ENCODE measurements at regions of chr1 and their contacts with region 1.

Region 1: DNA sequence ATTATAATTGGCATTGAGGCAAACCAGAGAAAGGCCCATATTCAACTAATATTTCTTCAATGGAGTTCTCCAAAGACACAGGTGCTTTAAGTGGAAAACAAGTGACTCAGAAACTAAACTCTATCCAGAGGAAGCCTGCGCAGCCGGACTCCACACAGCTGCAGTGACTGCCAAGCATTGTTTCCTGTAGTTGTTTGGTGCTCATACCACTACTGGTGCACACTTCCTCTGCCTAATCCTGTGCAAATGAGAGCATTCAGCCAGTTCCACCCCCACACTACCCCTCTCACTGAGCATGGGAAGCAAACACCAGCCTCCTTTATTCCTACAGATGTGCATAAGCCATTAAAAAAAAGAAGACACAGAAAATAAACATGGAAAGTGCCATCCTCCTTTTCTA is 102.9 kb downstream of the VAV3 start:
- DNase-seq: peak; percentile 95
- H3K4me3 ChIP-seq: no peak overlapping the region
- H3K27ac ChIP-seq: no peak overlapping the region
- H3K4me1 ChIP-seq: peaks cover 15% of the 10 kb centered on the region
- H3K27me3 ChIP-seq: no peaks in the 10 kb centered on the region
- CTCF ChIP-seq: no peak
- POLR2A ChIP-seq: no peak

Region 2: DNA sequence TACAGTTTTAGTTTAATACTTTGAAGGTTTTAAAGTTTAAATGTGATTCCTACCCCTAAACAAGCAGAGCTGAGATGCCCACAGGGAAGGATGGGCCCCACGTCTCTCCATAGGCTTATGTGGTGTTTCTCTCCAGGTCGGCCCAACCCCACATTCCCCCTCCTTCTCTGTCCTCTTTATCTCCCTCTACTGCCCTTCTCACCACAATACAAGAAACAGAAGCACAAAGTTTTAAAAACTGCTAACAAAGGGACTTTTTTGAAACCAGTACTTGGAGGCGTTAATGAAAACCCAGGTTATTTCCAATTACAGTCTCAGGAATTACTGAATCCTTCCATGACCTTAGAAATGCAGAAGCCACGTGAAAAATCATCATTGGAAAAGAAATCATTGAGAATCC is 397.2 kb before region 1 on chr1:
- CTCF ChIA-PET with region 1: no interaction called
- POLR2A ChIA-PET with region 1: no interaction called
- dilution Hi-C with region 1: no loop called
- intact Hi-C with region 1: no loop called
- DNase-seq: no peak
- H3K4me3 ChIP-seq: no peak overlapping the region
- H3K27ac ChIP-seq: no peak overlapping the region
- H3K4me1 ChIP-seq: no peaks in the 10 kb centered on the region
- H3K27me3 ChIP-seq: no peaks in the 10 kb centered on the region
- CTCF ChIP-seq: no peak
- POLR2A ChIP-seq: no peak

Region 3: GRCh38 chr1:107829061-107830040 is 32.7 kb before region 1 on chr1:
- CTCF ChIA-PET with region 1: no interaction called
- POLR2A ChIA-PET with region 1: no interaction called
- dilution Hi-C with region 1: no loop called
- intact Hi-C with region 1: loop called (anchors 1 kb)
- DNase-seq: peak; percentile 55
- H3K4me3 ChIP-seq: peak overlapping the region in 1 of 3 experiments; percentile 21
- H3K27ac ChIP-seq: peak overlapping the region; percentile 21
- H3K4me1 ChIP-seq: peaks cover 11% of the 10 kb centered on the region
- H3K27me3 ChIP-seq: no peaks in the 10 kb centered on the region
- CTCF ChIP-seq: no peak
- POLR2A ChIP-seq: no peak

Region 4: DNA sequence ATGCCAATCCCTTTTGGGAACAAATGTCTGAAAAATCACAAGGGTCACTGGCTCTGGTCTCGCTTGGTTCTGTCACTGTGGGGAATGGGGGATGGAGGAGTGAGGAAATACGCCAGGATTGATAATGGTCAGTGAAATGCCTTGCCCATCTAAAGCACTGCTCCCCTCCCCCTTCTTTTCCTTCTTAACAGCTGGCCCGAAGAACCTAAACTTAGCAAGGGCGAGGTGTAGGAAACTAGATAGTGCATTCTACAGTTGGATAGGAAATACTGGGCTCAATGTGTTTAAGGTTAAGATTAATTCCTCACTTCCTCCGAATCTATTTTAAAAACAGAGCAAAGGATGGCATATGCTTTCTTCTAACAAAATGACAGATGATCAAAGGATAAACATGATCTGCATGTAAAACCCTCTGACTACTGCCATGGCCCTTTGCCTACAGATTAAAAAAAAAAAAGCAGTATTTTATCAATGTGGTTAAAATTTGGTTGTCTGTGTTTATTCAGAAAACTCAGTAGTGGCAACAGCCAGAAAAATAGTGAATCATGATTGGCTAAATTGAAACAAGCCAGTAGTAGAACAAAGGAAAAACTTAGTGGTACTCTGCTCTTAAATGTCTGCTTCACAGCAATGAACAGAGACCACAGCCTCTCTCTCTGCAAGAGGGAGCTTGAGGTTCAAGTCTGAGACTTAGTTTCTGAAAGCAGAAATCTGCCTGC is 189.0 kb after region 1 on chr1:
- CTCF ChIA-PET with region 1: no interaction called
- POLR2A ChIA-PET with region 1: no interaction called
- dilution Hi-C with region 1: no loop called
- intact Hi-C with region 1: loop called (anchors 2 kb)
- DNase-seq: peak; percentile 80
- H3K4me3 ChIP-seq: no peak overlapping the region
- H3K27ac ChIP-seq: peak overlapping the region; percentile 13
- H3K4me1 ChIP-seq: peaks cover 18% of the 10 kb centered on the region
- H3K27me3 ChIP-seq: no peaks in the 10 kb centered on the region
- CTCF ChIP-seq: no peak
- POLR2A ChIP-seq: no peak

Measured in endothelial cell of umbilical vein (primary cell).